A673 (cell line): ENCODE measurements at regions of chr18 and their contacts with region 1.

Region 1: GRCh38 chr18:56139792-56140254 is 498.6 kb downstream of the TXNL1 start:
- DNase-seq: no peak
- H3K4me3 ChIP-seq: no peak overlapping the region
- H3K27ac ChIP-seq: no peak overlapping the region
- H3K4me1 ChIP-seq: no peaks in the 10 kb centered on the region
- H3K27me3 ChIP-seq: no peaks in the 10 kb centered on the region
- CTCF ChIP-seq: no peak

Region 2: GRCh38 chr18:56197241-56197859 is 57.5 kb after region 1 on chr18:
- CTCF ChIA-PET with region 1: no interaction called
- POLR2A ChIA-PET with region 1: no interaction called
- intact Hi-C with region 1: loop called (anchors 10 kb)
- DNase-seq: no peak
- H3K4me3 ChIP-seq: no peak overlapping the region
- H3K27ac ChIP-seq: no peak overlapping the region
- H3K4me1 ChIP-seq: no peaks in the 10 kb centered on the region
- H3K27me3 ChIP-seq: no peaks in the 10 kb centered on the region
- CTCF ChIP-seq: no peak